Calu3 (cell line): ENCODE measurements at regions of chr12 and their contacts with region 1.

Region 1: GRCh38 chr12:103884316-103884715 is 43.3 kb upstream of the NT5DC3 start:
- DNase-seq: peak; percentile 30
- H3K4me3 Mint-ChIP-seq: no peak overlapping the region
- H3K27ac Mint-ChIP-seq: no peak overlapping the region
- H3K4me1 Mint-ChIP-seq: peaks cover 21% of the 10 kb centered on the region
- H3K27me3 Mint-ChIP-seq: no peaks in the 10 kb centered on the region
- CTCF ChIP-seq: no peak

Region 2: DNA sequence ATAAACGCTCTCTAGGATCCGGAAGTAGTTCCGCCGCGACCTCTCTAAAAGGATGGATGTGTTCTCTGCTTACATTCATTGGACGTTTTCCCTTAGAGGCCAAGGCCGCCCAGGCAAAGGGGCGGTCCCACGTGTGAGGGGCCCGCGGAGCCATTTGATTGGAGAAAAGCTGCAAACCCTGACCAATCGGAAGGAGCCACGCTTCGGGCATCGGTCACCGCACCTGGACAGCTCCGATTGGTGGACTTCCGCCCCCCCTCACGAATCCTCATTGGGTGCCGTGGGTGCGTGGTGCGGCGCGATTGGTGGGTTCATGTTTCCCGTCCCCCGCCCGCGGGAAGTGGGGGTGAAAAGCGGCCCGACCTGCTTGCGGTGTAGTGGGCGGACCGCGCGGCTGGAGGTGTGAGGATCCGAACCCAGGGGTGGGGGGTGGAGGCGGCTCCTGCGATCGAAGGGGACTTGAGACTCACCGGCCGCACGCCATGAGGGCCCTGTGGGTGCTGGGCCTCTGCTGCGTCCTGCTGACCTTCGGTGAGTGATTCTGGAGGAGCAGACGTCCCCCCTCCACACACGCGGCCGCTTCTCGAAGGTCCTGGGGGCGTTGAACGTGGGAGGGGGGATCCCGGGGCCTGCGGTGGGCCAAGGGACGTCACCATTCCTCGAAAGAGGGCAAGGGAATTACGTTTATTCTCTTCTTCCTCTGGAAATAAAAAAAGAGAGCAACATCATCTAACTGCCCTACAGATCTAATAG is 45.9 kb after region 1 on chr12 and contains the start of gene HSP90B1:
- CTCF ChIA-PET with region 1: interaction called, 6 read pairs
- intact Hi-C with region 1: loop called (anchors 2 kb)
- DNase-seq: peak; percentile 100
- H3K4me3 Mint-ChIP-seq: peak within 1 kb of the TSS; percentile 82
- H3K27ac Mint-ChIP-seq: peak within 1 kb of the TSS; percentile 100
- H3K4me1 Mint-ChIP-seq: peaks cover 42% of the 10 kb centered on the region
- H3K27me3 Mint-ChIP-seq: no peaks in the 10 kb centered on the region
- CTCF ChIP-seq: no peak
- total RNA-seq, gene HSP90B1: 1,299 and 1,328 TPM in 2 replicates

Region 3: DNA sequence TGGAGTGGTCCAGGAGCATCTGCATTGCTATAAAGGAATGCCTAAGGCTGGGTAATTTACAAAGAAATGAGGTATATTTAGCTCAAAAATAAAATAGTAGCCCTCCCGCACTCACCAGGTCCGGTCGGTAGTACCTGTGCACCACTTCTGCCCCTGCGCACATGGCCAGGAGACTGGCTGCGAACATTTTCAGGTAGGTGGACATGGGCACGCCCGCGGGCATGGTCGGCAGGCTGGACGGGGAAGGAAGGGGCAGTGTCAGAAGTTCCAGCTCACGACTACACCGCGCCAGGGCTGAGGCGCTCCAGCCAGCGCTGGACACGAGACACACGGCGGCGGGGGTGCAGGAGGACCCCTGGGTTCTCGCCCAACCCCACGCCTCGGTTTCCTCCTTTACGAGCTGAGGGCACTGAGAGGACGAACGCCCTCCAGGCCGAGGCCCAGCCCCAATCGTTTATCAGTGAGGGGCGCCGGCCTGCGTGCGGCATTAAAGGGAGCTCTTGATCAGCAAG is 72.3 kb after region 1 on chr12:
- CTCF ChIA-PET with region 1: no interaction called
- intact Hi-C with region 1: loop called (anchors 5 kb)
- DNase-seq: peak; percentile 36
- H3K4me3 Mint-ChIP-seq: peak overlapping the region; percentile 77
- H3K27ac Mint-ChIP-seq: peak overlapping the region; percentile 92
- H3K4me1 Mint-ChIP-seq: peaks cover 29% of the 10 kb centered on the region
- H3K27me3 Mint-ChIP-seq: no peaks in the 10 kb centered on the region
- CTCF ChIP-seq: no peak